CD4-positive, alpha-beta T cell (primary cell): ENCODE measurements at regions of chr4 and their contacts with region 1.

Region 1: DNA sequence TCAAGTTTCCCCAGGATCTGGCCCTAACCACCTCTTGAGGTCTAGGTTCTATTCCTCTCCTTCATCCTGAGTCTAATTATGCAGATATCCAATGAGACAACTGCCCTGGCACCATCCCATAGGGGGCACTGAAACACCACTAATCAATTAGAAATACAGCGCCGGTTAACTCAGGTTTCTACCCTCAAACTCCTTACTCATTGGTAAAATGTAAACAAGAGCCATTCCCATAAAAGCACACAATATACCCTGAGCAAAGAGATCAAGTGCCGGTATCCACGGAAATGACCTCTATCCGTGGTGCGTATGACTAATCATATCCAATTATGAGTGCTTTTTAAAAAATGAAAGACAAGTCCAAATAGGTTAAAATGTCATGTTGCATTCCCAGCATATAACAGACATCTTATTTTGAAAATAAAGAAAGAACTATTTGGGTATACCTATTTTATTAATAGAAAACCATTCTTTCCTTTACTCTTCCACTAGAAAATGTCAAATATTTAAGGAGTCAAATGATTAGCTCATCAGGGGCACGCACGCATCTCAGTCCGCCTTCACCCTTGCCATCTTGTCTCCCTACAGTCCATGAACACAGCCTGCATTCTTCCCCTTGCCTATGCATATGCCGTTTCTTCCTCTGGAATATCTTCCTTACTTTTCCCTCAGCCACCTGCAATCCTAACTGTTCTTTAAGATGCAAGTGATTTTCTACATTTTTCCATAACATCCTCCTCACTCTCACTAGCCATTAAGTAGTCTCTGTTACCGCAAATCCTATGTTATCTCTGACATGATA is 141.1 kb downstream of the MAML3 start:
- DNase-seq: peak; percentile 44 to 81 (median 55)
- ATAC-seq: peak; percentile 93
- H3K4me3 ChIP-seq: no peak overlapping the region
- H3K4me3 Mint-ChIP-seq: no peak overlapping the region
- H3K27ac ChIP-seq: no peak overlapping the region
- H3K27ac Mint-ChIP-seq: no peak overlapping the region
- H3K4me1 ChIP-seq: no peaks in the 10 kb centered on the region
- H3K4me1 Mint-ChIP-seq: no peaks in the 10 kb centered on the region
- H3K27me3 ChIP-seq: no peaks in the 10 kb centered on the region
- H3K27me3 Mint-ChIP-seq: peaks cover 7% of the 10 kb centered on the region
- CTCF ChIP-seq: peak; percentile 82

Region 2: GRCh38 chr4:139651282-139652194 is 361.3 kb before region 1 on chr4:
- CTCF ChIA-PET with region 1: no interaction called
- POLR2A ChIA-PET with region 1: no interaction called
- intact Hi-C with region 1: loop called in 1 of 2 experiments (anchors 10 kb)
- DNase-seq: peak; percentile 52 to 87 (median 59)
- ATAC-seq: peak; percentile 92
- H3K4me3 ChIP-seq: no peak overlapping the region
- H3K4me3 Mint-ChIP-seq: no peak overlapping the region
- H3K27ac ChIP-seq: no peak overlapping the region
- H3K27ac Mint-ChIP-seq: no peak overlapping the region
- H3K4me1 ChIP-seq: peaks cover 5% of the 10 kb centered on the region
- H3K4me1 Mint-ChIP-seq: peaks cover 6% of the 10 kb centered on the region
- H3K27me3 ChIP-seq: peaks cover 0 to 5% of the 10 kb centered on the region in 2 experiments
- H3K27me3 Mint-ChIP-seq: peaks cover 4% of the 10 kb centered on the region
- CTCF ChIP-seq: peak; percentile 95

Region 3: DNA sequence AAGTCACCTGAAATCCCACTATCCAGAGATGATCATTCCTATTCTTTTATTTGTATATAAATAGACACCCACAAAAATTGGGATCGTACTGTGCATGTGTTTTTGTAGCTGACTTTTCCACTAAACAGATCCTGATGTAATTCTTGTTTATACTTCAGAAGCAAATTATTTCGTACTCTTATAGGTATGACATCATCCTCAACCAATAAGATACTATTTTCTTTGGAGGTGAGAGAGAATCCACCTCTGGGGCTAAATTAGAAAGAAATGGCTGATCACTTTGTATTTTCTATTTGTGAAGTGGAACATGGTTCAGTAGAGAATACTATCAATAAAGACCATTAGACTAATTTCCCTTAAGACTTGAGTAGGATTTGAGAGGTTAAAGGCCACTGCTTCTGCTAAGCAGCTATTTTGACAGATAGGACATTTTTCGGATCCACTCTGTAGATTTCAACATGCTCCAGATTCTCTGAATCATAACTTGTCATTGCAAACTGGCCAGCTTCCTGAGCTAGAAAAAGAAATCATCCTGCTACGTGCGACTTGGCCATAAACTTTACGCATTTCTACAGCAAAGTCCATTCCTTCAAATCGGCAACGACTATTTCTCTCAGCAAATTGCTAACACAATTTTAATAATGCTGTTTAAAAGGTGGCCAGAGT is 292.2 kb before region 1 on chr4:
- CTCF ChIA-PET with region 1: no interaction called
- POLR2A ChIA-PET with region 1: no interaction called
- intact Hi-C with region 1: no loop called
- DNase-seq: no peak
- ATAC-seq: no peak
- H3K4me3 ChIP-seq: no peak overlapping the region
- H3K4me3 Mint-ChIP-seq: no peak overlapping the region
- H3K27ac ChIP-seq: no peak overlapping the region
- H3K27ac Mint-ChIP-seq: no peak overlapping the region
- H3K4me1 ChIP-seq: no peaks in the 10 kb centered on the region
- H3K4me1 Mint-ChIP-seq: no peaks in the 10 kb centered on the region
- H3K27me3 ChIP-seq: no peaks in the 10 kb centered on the region
- H3K27me3 Mint-ChIP-seq: no peaks in the 10 kb centered on the region
- CTCF ChIP-seq: no peak

Region 4: GRCh38 chr4:140028676-140029517 is 16.0 kb after region 1 on chr4:
- CTCF ChIA-PET with region 1: no interaction called
- POLR2A ChIA-PET with region 1: no interaction called
- intact Hi-C with region 1: no loop called
- DNase-seq: no peak
- ATAC-seq: no peak
- H3K4me3 ChIP-seq: no peak overlapping the region
- H3K4me3 Mint-ChIP-seq: no peak overlapping the region
- H3K27ac ChIP-seq: no peak overlapping the region
- H3K27ac Mint-ChIP-seq: no peak overlapping the region
- H3K4me1 ChIP-seq: no peaks in the 10 kb centered on the region
- H3K4me1 Mint-ChIP-seq: no peaks in the 10 kb centered on the region
- H3K27me3 ChIP-seq: peaks cover 0 to 5% of the 10 kb centered on the region in 2 experiments
- H3K27me3 Mint-ChIP-seq: no peaks in the 10 kb centered on the region
- CTCF ChIP-seq: no peak

Region 5: DNA sequence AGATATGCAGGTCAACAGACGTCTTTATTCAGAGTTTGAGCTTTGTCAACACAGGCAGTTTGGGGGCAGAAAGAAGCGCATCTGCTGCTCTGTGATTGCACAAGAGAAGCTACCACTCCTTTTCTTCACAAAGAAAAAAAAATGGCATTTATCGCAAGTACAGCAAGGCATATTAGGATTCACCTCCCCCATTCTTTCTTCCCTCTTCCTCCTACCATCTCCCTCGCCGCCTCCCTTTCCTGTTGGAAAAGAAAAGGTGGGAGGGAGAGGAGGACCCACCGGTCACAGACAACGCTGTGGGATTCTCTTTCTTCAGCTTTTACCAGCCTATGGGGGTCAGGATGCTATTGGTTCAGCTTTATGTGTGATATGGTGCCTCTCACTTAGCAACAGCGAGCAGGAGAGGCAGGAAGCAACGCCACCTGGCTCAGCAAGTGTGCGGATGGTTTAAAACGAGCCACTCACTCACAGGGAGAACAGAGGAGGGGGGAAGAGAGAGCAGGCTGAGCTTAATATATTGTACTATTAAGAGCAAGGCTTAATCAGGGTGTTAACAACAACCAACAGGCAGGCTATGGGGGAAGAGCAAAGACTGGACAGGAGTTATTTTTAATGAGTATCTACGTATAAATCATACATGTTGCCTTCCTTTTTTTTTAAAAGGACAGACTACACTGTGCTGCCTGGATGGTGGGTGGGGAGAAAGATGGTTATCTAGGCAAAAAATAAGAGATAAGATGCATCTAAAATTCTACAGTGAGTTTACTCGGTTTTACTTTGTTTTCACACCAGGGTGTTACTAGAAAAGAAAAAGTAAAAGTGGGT is 36.3 kb after region 1 on chr4:
- CTCF ChIA-PET with region 1: interaction called, 3 read pairs
- POLR2A ChIA-PET with region 1: no interaction called
- intact Hi-C with region 1: loop called in 1 of 2 experiments (anchors 2 kb)
- DNase-seq: peak; percentile 14 to 72 (median 44)
- ATAC-seq: peak; percentile 99
- H3K4me3 ChIP-seq: peak overlapping the region; percentile 28
- H3K4me3 Mint-ChIP-seq: peak overlapping the region; percentile 83
- H3K27ac ChIP-seq: peak overlapping the region in 1 of 2 donors; percentile 9
- H3K27ac Mint-ChIP-seq: peak overlapping the region; percentile 79
- H3K4me1 ChIP-seq: peaks cover 14% of the 10 kb centered on the region
- H3K4me1 Mint-ChIP-seq: peaks cover 48% of the 10 kb centered on the region
- H3K27me3 ChIP-seq: no peaks in the 10 kb centered on the region
- H3K27me3 Mint-ChIP-seq: no peaks in the 10 kb centered on the region
- CTCF ChIP-seq: no peak

Region 6: DNA sequence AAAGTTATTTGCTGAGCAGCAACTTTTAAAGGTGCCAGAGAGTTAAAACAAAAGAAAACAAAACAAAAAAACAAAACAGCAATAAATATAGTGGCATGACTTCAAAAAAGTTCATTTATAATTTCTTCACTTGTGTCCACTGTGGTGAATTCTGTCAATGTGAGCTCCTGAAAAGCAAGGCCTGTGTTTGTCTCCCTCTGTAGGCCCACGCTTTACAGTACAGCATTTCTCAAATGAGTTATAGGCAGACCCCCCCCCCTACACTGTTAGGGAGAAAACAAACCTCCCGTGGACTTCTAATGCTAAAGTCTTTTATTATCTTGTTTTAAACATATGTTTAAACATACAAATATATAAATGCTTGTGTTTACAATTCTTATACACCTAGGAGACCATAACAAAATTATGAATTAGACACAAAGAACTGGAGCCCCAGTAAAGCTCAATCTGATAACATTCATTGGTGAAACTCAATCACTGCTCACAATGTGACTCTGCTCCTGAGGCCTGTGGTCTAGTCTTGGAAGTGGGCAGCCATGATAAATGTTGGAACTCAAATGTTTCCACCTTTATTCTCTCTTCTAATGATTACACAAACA is 313.6 kb after region 1 on chr4:
- CTCF ChIA-PET with region 1: no interaction called
- POLR2A ChIA-PET with region 1: no interaction called
- intact Hi-C with region 1: loop called in 1 of 2 experiments (anchors 1 kb)
- DNase-seq: peak in 4 of 14 experiments; percentile 4 to 33 (median 16)
- ATAC-seq: no peak
- H3K4me3 ChIP-seq: no peak overlapping the region
- H3K4me3 Mint-ChIP-seq: no peak overlapping the region
- H3K27ac ChIP-seq: no peak overlapping the region
- H3K27ac Mint-ChIP-seq: no peak overlapping the region
- H3K4me1 ChIP-seq: no peaks in the 10 kb centered on the region
- H3K4me1 Mint-ChIP-seq: no peaks in the 10 kb centered on the region
- H3K27me3 ChIP-seq: no peaks in the 10 kb centered on the region
- H3K27me3 Mint-ChIP-seq: no peaks in the 10 kb centered on the region
- CTCF ChIP-seq: no peak

Region 7: DNA sequence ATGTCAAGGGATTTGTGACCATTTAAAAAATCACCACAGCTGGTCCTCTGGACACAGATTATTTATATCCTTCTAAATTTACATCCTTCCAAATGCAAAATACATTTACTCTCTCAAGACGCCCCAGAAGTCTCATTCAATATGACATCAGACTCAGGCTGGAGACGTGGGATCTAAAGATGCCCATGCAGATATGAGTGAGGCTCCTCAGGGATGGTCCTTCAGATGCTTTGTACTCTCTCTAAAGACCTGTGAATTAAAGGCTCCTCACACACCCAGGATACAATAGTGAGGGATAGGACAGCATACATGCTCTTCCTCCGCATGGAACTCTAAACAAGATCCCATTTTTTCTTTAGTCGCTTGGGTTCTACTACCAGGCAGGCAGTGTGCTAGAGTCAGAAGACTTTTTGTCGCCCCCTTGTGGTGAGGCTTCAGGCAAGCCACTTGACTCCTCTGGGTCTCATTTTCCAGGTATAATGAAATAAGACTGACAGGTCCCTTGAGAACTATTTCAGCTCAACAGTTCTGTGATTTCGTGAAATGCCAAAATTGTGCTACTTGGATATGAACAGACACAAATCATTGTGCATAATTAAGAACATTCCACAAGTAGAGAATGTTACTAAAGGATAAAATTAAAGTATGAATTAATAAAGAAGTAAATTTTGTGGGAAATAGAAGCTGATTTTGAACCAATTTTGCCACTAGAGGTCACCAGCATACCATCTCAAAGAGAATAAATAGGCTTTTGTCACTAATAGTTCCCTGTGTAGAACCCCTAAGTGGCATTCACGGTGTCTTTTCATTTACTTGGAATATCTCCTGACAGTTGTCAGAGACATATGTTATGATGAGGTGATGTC is 346.9 kb after region 1 on chr4:
- CTCF ChIA-PET with region 1: interaction called, 3 read pairs
- POLR2A ChIA-PET with region 1: no interaction called
- intact Hi-C with region 1: loop called in 1 of 2 experiments (anchors 1 kb)
- DNase-seq: peak; percentile 57 to 89 (median 71)
- ATAC-seq: peak; percentile 94
- H3K4me3 ChIP-seq: no peak overlapping the region
- H3K4me3 Mint-ChIP-seq: no peak overlapping the region
- H3K27ac ChIP-seq: no peak overlapping the region
- H3K27ac Mint-ChIP-seq: no peak overlapping the region
- H3K4me1 ChIP-seq: no peaks in the 10 kb centered on the region
- H3K4me1 Mint-ChIP-seq: no peaks in the 10 kb centered on the region
- H3K27me3 ChIP-seq: no peaks in the 10 kb centered on the region
- H3K27me3 Mint-ChIP-seq: no peaks in the 10 kb centered on the region
- CTCF ChIP-seq: peak; percentile 98